Activated T-helper 2 cell treated with anti-CD3 and anti-CD28 coated beads, Interferon-gamma antibody, Interleukin-2, Interleukin-4, amounts not matched to agents 10 μg/mL and 5 μg/mL and 100 μg/mL, durations not matched to agents 14 hours and 24 hours and 36 hours (primary cell): ENCODE measurements at regions of chr5 and their contacts with region 1.

Region 1: GRCh38 chr5:37412515-37413277 is 33.6 kb downstream of the WDR70 start:
- DNase-seq: peak; percentile 10
- H3K4me3 Mint-ChIP-seq: no peak overlapping the region
- H3K27ac Mint-ChIP-seq: no peak overlapping the region
- H3K4me1 Mint-ChIP-seq: no peaks in the 10 kb centered on the region
- H3K27me3 Mint-ChIP-seq: no peaks in the 10 kb centered on the region

Region 2: DNA sequence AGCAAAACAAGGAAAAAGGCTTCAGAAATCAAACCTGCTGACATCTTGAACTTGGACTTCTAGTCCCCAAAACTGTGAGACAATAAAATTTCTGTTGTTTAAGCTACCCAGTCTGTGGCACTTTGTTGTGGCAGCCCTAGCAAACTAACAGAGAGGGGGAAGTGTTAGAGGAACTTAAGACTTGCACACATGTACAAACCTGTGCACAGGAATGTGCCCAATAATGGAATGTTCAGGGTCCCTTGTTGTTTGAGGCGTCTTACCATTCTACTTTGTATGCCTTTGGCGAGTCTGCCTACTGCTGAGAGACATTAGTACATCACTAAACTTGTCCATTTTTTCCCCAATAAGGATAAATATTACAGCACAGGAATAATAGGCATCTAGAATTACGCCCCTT is 126.8 kb after region 1 on chr5:
- intact Hi-C with region 1: no loop called
- DNase-seq: no peak
- H3K4me3 Mint-ChIP-seq: no peak overlapping the region
- H3K27ac Mint-ChIP-seq: no peak overlapping the region
- H3K4me1 Mint-ChIP-seq: no peaks in the 10 kb centered on the region
- H3K27me3 Mint-ChIP-seq: no peaks in the 10 kb centered on the region

Region 3: DNA sequence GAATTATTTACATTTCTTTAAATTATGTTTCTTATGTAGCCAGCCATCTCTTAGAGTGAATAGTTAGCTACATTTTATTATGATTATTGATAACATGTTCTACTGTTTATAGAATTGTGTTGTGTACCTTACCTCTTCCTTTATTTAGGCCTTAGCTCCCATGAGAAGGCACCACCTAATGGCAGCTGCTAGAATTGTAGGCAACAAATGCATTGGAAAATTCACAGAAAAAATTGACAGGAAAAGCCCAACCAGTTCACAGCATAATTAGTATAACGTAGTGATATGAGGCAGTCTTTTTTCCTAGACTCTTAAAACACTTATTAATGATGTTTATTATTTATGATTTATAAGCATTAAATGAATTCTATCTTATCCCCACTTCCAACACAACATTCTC is 142.2 kb after region 1 on chr5:
- intact Hi-C with region 1: loop called (anchors 5 kb)
- DNase-seq: no peak
- H3K4me3 Mint-ChIP-seq: no peak overlapping the region
- H3K27ac Mint-ChIP-seq: no peak overlapping the region
- H3K4me1 Mint-ChIP-seq: peaks cover 8% of the 10 kb centered on the region
- H3K27me3 Mint-ChIP-seq: no peaks in the 10 kb centered on the region

Region 4: GRCh38 chr5:37837414-37838032 is 424.8 kb after region 1 on chr5:
- intact Hi-C with region 1: loop called (anchors 10 kb)
- DNase-seq: peak; percentile 57
- H3K4me3 Mint-ChIP-seq: peak overlapping the region; percentile 49
- H3K27ac Mint-ChIP-seq: no peak overlapping the region
- H3K4me1 Mint-ChIP-seq: peaks cover 22% of the 10 kb centered on the region
- H3K27me3 Mint-ChIP-seq: peaks cover 83% of the 10 kb centered on the region

Region 5: GRCh38 chr5:38193015-38193581 is 780.4 kb after region 1 on chr5:
- intact Hi-C with region 1: loop called (anchors 1 kb)
- DNase-seq: peak; percentile 37
- H3K4me3 Mint-ChIP-seq: no peak overlapping the region
- H3K27ac Mint-ChIP-seq: no peak overlapping the region
- H3K4me1 Mint-ChIP-seq: no peaks in the 10 kb centered on the region
- H3K27me3 Mint-ChIP-seq: peaks cover 18% of the 10 kb centered on the region